Activated CD8-positive, alpha-beta T cell treated with anti-CD3 and anti-CD28 coated beads for 36 hours (primary cell): ENCODE measurements at regions of chr12 and their contacts with region 1.

Region 1: DNA sequence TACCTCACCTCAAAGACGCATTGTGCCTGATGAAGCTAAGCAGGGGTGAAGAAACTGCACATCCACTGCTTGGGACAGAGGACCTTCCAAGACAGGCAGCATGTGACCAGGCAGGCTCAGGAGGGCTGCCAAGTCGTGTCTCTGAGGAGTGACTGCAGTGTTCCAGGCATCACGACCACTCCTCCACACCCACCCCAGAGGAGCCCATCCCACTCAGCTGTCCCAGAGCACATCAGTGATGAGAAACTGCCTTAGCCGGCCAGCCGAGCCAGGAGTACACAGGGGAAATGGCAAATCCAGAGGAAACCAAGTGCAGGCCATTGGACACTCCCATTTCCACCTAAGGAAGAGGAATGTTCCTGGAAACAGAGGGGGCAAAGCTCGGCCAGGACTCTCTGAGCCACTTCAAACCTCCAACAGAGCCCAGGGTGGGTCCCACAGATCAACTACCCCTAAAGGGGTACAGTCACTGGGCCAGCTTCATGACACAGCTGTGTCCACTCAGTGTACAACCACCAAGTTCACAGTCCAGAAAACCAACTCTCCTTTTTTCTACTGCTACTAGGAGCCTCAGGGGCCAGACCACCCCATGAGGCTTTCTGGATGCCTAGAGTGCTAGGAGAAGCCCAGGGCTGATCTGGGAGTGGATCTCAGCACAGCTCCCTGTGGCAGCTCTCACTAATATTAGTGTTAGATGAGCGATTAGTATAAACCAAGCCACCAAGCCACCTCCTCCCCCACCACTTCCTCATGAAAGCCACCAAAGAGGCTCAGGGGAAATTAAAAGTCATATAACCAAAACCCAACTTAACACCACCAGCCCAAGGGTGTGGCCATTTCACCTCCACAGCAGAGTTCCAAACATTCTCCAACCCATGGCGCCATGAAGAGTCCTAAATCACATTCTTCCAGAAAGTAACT is 15.4 kb downstream of the PXN start:
- DNase-seq: peak; percentile 75
- ATAC-seq: peak; percentile 8
- H3K4me3 Mint-ChIP-seq: peak overlapping the region; percentile 6
- H3K27ac Mint-ChIP-seq: peak overlapping the region; percentile 34
- H3K4me1 Mint-ChIP-seq: peaks cover 75% of the 10 kb centered on the region
- H3K27me3 Mint-ChIP-seq: no peaks in the 10 kb centered on the region
- CTCF ChIP-seq: no peak

Region 2: GRCh38 chr12:120234643-120235368 is 15.3 kb before region 1 on chr12:
- CTCF ChIA-PET with region 1: interaction called, 749 read pairs
- POLR2A ChIA-PET with region 1: interaction called, 31 read pairs
- intact Hi-C with region 1: loop called (anchors 1 kb)
- DNase-seq: no peak
- ATAC-seq: no peak
- H3K4me3 Mint-ChIP-seq: no peak overlapping the region
- H3K27ac Mint-ChIP-seq: peak overlapping the region; percentile 13
- H3K4me1 Mint-ChIP-seq: peaks cover 70% of the 10 kb centered on the region
- H3K27me3 Mint-ChIP-seq: no peaks in the 10 kb centered on the region
- CTCF ChIP-seq: no peak